ENCODE measurements at regions of chr1 and their contacts with region 1.

Region 1: DNA sequence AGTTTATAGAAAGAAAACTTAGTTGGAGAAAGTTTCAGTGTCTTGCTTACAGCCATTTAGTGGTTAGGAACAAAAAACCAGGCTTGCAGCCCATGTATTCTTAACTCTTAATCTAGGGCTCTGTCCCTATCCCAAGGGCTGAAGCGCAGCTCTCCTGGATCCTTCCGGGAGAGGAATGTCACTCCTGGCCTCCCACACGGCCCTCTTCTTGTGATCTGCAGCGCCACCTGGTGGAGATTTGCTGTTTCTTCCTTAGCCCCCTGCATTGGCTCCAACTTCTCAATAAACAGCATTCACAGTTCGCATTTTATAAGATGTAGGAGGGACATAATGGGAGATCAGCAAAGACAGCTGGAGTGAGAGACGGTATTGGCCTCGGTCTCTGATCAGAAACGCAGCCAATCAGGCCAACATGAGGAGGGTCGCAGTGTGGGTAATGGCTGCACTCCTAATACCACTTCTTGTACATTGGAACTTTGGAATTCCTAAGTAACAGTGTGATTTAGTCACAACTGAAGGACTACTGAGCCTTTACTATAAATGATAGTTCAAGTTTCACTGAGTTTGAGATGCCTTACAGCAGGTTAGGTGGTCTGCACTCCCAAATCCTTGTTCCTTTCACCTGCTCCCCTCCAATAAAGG is 283.4 kb downstream of the ASTN1 start:
- DNase-seq: peak; percentile 50
- H3K4me3 ChIP-seq: no peak overlapping the region
- H3K27ac ChIP-seq: no peak overlapping the region
- H3K4me1 ChIP-seq: peaks cover 11% of the 10 kb centered on the region
- H3K27me3 ChIP-seq: no peaks in the 10 kb centered on the region
- CTCF ChIP-seq: peak; percentile 73 to 90

Region 2: GRCh38 chr1:176843352-176844297 is 37.5 kb before region 1 on chr1:
- CTCF ChIA-PET with region 1: no interaction called
- dilution Hi-C with region 1: no loop called
- in situ Hi-C with region 1: no loop called
- intact Hi-C with region 1: loop called (anchors 1 kb)
- DNase-seq: peak; percentile 12
- H3K4me3 ChIP-seq: no peak overlapping the region
- H3K27ac ChIP-seq: no peak overlapping the region
- H3K4me1 ChIP-seq: no peaks in the 10 kb centered on the region
- H3K27me3 ChIP-seq: peaks cover 5% of the 10 kb centered on the region
- CTCF ChIP-seq: peak; percentile 38 to 66

Region 3: DNA sequence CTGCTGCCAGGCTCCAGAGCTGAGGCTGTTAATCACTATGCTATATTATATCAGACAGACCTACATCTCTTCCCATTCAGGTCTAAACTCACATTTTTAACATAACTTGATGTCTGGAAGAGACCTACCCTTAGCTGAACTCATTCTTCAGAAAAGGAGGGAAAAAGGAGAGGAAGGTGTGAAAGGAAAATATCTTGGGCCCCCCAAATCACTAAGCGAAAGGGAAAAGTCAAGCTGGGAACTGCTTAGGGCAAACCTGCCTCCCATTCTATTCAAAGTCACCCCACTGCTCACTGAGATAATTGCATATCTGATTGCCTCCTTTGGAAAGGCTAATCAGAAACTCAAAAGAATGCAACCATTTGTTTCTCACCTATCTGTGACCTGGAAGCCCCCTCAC is 61.3 kb after region 1 on chr1:
- CTCF ChIA-PET with region 1: no interaction called
- dilution Hi-C with region 1: no loop called
- in situ Hi-C with region 1: no loop called
- intact Hi-C with region 1: no loop called
- DNase-seq: no peak
- H3K4me3 ChIP-seq: no peak overlapping the region
- H3K27ac ChIP-seq: no peak overlapping the region
- H3K4me1 ChIP-seq: no peaks in the 10 kb centered on the region
- H3K27me3 ChIP-seq: no peaks in the 10 kb centered on the region
- CTCF ChIP-seq: no peak

Region 4: GRCh38 chr1:176989023-176989422 is 107.9 kb after region 1 on chr1:
- CTCF ChIA-PET with region 1: no interaction called
- dilution Hi-C with region 1: no loop called
- in situ Hi-C with region 1: no loop called
- intact Hi-C with region 1: no loop called
- DNase-seq: peak; percentile 81
- H3K4me3 ChIP-seq: no peak overlapping the region
- H3K27ac ChIP-seq: no peak overlapping the region
- H3K4me1 ChIP-seq: peaks cover 16% of the 10 kb centered on the region
- H3K27me3 ChIP-seq: no peaks in the 10 kb centered on the region
- CTCF ChIP-seq: no peak

Measured in mammary epithelial cell (primary cell).